ENCODE measurements at regions of chr2 and their contacts with region 1.

Region 1: DNA sequence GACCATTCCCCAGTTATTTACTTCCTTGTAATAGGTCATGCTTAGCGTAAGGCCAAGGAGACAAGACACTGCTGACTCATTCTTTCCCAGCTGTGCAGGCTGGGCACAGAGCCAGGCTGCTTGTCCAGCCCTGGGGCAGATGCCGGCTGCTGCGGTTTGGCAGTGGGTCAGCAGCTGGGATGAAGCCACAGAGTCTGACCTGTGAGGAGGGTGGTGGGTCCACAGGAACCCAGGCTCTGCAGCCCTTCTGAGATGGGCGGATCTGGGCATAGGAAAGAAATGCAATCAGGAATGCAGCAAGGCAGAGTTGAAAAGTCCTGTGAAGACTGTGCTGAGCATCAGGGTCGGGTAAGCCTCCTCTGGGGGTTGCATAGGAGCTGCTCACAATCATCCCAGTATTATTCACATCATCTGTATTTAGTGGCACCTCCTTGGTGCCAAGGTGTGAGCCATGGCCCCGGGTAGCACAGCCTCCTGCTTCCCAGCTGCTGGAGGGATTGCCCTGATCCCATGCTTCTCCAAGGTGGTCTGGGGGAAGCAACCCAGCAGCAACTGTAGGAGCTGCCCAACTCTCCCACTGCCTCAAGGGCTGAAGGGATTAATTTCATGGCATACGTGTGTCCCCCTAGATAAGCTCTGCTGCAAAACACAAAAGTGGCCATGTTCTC is 139.0 kb downstream of the DDX1 start:
- DNase-seq: peak; percentile 98
- ATAC-seq: peak; percentile 89

Region 2: DNA sequence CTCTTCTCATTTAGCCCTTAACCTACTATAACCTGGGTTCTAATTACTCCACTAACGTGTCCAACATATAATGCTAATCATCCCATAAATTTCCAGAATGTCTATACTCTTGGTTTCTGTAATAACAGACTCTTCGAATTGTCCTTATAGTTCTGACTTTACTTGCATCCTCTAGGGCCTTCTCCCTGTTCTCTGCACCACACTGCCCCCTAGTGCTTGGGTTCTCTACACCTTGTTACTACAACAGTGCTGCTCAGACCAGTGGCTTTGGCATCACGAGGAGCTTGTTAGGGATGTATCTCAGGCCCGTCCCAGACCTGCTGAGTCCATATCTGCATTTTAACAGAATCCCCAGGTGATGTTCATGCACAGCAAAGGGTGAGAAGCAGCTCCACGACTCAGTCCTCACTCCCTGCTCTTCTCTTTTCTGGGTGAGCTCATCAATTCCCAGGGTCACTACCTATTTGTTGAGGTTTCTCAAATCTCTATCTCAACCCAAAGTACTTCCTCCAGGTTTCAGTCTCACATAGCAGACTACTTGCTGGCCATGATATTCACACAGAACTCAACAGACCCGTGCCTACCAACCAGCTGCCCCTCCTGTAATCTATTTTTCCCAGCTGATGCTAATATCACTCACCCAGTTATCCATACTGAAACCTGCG is 153.5 kb before region 1 on chr2:
- intact Hi-C with region 1: no loop called
- DNase-seq: peak; percentile 80
- ATAC-seq: peak; percentile 78

Region 3: GRCh38 chr2:15912205-15912604 is 181.5 kb after region 1 on chr2:
- intact Hi-C with region 1: loop called (anchors 5 kb)
- DNase-seq: no peak
- ATAC-seq: peak; percentile 72